GM12878 (cell line): ENCODE measurements at regions of chr5 and their contacts with region 1.

Region 1: GRCh38 chr5:99187611-99188010 is 258.8 kb upstream of the CHD1 start:
- DNase-seq: no peak
- ATAC-seq: no peak
- H3K4me3 ChIP-seq: no peak overlapping the region
- H3K27ac ChIP-seq: no peak overlapping the region
- H3K4me1 ChIP-seq: no peaks in the 10 kb centered on the region
- H3K27me3 ChIP-seq: no peaks in the 10 kb centered on the region
- CTCF ChIP-seq: no peak
- EP300 ChIP-seq: no peak
- POLR2A ChIP-seq: no peak
- RAD21 ChIP-seq: no peak

Region 2: DNA sequence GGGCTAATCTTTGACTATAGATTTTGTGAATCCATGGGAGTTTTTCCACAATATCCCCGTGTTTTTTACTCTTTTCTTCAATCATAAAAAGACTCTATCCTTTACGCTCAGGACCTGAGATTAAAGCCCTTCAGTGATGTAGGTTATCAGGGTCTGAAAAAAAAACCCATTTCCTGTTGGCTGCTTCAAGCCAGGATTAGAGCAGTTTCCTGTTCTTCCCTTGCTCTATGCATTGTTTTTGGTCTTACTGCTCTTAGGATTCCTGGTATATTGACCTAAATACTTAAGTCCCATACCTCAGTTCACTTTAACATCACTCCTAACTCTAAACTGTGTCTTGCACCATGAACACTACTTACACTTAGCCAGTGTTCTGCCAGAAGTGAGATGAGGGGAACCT is 60.5 kb after region 1 on chr5:
- CTCF ChIA-PET with region 1: no interaction called
- POLR2A ChIA-PET with region 1: no interaction called
- RAD21 ChIA-PET with region 1: no interaction called
- SMC1A ChIA-PET with region 1: no interaction called
- in situ Hi-C with region 1: loop called (anchors 10 kb)
- intact Hi-C with region 1: no loop called
- DNase-seq: no peak
- ATAC-seq: no peak
- H3K4me3 ChIP-seq: no peak overlapping the region
- H3K27ac ChIP-seq: no peak overlapping the region
- H3K4me1 ChIP-seq: no peaks in the 10 kb centered on the region
- H3K27me3 ChIP-seq: no peaks in the 10 kb centered on the region
- CTCF ChIP-seq: no peak
- EP300 ChIP-seq: no peak
- POLR2A ChIP-seq: no peak
- RAD21 ChIP-seq: no peak

Region 3: GRCh38 chr5:99285606-99286005 is 98.0 kb after region 1 on chr5:
- CTCF ChIA-PET with region 1: no interaction called
- POLR2A ChIA-PET with region 1: no interaction called
- RAD21 ChIA-PET with region 1: no interaction called
- SMC1A ChIA-PET with region 1: no interaction called
- in situ Hi-C with region 1: no loop called
- intact Hi-C with region 1: no loop called
- DNase-seq: no peak
- ATAC-seq: no peak
- H3K4me3 ChIP-seq: no peak overlapping the region
- H3K27ac ChIP-seq: no peak overlapping the region
- H3K4me1 ChIP-seq: no peaks in the 10 kb centered on the region
- H3K27me3 ChIP-seq: no peaks in the 10 kb centered on the region
- CTCF ChIP-seq: no peak
- EP300 ChIP-seq: no peak
- POLR2A ChIP-seq: no peak
- RAD21 ChIP-seq: no peak